ENCODE measurements at regions of chr12 and their contacts with region 1.

Region 1: GRCh38 chr12:89051065-89051677 is 301.1 kb downstream of the DUSP6 start:
- DNase-seq: peak; percentile 51
- CTCF ChIP-seq: peak; percentile 69

Region 2: GRCh38 chr12:88993651-88994050 is 57.5 kb before region 1 on chr12:
- in situ Hi-C with region 1: no loop called
- DNase-seq: peak; percentile 7
- CTCF ChIP-seq: peak; percentile 26

Region 3: GRCh38 chr12:89156862-89157262 is 105.7 kb after region 1 on chr12:
- in situ Hi-C with region 1: no loop called
- DNase-seq: no peak
- CTCF ChIP-seq: no peak

Region 4: DNA sequence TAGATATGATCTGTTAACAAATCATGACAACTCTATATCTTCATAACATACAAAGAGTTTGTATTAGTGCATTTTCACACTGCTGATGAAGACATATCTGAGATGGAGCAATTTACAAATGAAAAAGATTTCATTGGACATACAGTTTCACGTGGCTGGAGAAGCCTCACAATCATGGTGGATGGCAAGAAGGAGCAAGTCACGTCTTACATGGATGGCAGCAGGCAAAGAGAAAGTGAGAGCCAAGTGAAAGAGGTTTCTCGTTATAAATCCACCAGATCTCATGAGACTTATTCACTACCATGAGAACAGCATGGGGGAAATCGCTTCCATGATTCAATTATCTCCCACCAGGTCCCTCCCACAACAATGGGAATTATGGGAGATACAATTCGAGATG is 143.5 kb after region 1 on chr12:
- in situ Hi-C with region 1: no loop called
- DNase-seq: no peak
- CTCF ChIP-seq: no peak

Region 5: GRCh38 chr12:89461649-89462612 is 410.8 kb after region 1 on chr12:
- in situ Hi-C with region 1: loop called (anchors 10 kb)
- DNase-seq: peak; percentile 40
- CTCF ChIP-seq: peak; percentile 52

Measured in GM13977 (cell line).